Activated B cell treated with CpG ODN at 0.5 μM for 24 hours (primary cell): ENCODE measurements at regions of chr10 and their contacts with region 1.

Region 1: DNA sequence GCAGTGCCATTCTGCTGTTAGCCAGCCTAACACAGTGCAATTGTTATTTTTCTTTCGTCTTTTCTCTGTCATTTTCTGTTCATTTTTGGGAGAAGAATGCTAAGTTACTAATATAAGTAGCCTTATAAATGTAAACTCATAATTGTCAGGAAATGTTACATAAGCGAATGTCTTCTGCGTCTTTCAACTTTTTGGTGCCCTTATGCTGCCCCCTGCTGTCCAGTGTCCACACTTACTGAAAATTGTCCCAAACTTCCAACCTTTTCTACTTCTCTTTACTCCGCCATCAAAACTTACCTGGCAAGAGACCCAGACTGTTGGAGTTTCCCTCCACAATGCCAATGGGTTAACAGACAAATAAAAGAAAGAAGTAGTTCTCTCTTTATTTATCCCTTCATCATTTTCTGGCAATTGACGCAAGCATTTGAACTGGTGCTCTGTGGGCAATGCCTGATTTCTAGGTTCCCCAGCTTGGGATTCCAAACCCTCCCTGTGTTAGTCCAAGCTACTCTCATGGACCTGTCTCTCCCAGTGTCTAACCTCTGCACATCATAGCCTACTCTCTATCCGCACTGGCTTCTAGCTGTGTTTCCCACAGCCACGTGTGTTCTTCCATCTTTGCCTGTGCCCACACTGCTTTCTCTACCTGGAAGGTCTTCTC is 21.0 kb upstream of the EPC1 start:
- DNase-seq: peak; percentile 47
- ATAC-seq: peak; percentile 67
- H3K4me3 Mint-ChIP-seq: no peak overlapping the region
- H3K27ac Mint-ChIP-seq: no peak overlapping the region
- H3K4me1 Mint-ChIP-seq: peaks cover 22% of the 10 kb centered on the region
- H3K27me3 Mint-ChIP-seq: no peaks in the 10 kb centered on the region
- CTCF ChIP-seq: peak; percentile 65

Region 2: DNA sequence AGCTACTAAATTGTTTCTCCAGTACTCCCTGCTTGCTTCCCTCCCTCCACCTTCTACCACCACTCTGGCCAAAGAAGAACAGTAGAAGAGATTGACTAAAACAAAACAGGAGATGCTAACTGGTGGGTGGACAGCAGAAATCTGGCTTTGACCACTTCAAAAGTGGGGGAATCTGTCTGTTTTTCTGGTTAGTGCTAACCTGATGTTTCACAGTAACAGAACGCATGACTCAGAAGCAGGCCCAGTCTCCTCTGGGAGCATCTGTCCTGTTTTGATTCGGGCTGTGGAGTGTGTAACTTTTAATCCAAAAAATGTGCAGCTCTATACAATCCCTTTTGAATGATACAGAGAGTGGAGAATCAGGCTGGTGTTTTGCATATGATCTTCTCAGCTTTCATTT is 1303.6 kb before region 1 on chr10:
- CTCF ChIA-PET with region 1: no interaction called
- POLR2A ChIA-PET with region 1: no interaction called
- intact Hi-C with region 1: no loop called
- DNase-seq: no peak
- ATAC-seq: no peak
- H3K4me3 Mint-ChIP-seq: no peak overlapping the region
- H3K27ac Mint-ChIP-seq: no peak overlapping the region
- H3K4me1 Mint-ChIP-seq: peaks cover 3% of the 10 kb centered on the region
- H3K27me3 Mint-ChIP-seq: peaks cover 30% of the 10 kb centered on the region
- CTCF ChIP-seq: no peak

Region 3: GRCh38 chr10:31578187-31578852 is 789.6 kb before region 1 on chr10:
- CTCF ChIA-PET with region 1: no interaction called
- POLR2A ChIA-PET with region 1: no interaction called
- intact Hi-C with region 1: no loop called
- DNase-seq: no peak
- ATAC-seq: no peak
- H3K4me3 Mint-ChIP-seq: no peak overlapping the region
- H3K27ac Mint-ChIP-seq: peak overlapping the region; percentile 25
- H3K4me1 Mint-ChIP-seq: peaks cover 8% of the 10 kb centered on the region
- H3K27me3 Mint-ChIP-seq: no peaks in the 10 kb centered on the region
- CTCF ChIP-seq: no peak

Region 4: DNA sequence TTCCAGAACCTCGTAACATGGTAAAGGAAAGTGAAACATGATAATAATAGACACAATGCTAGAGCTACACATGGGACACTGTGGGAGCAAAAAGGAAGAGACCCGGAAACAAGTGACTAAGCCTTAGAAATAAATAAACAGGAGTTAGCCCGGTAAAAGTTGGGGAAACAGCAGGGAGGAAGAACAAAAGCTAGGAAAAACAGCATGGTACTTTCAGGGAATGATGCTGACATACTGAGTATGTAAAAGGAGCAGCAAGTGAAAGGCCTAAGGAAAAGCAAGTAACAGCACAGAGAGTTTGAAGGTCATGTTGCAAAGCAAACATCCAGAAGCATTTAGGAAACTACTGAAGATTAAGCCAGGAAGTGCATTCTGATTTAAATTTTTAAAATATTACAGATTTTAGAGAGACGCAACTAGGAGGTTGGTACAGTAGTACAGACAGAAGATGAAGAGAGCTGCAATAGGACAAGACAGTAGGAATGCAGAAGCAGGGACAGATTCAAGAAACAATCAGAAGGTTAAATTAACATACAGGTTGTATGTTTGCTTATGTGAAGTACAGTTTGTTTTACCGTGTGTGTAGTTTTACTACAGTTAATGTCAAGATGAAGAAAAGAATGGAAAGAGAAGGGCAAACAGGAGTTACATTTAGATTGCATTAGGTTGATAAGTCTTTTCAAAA is 502.9 kb before region 1 on chr10:
- CTCF ChIA-PET with region 1: no interaction called
- POLR2A ChIA-PET with region 1: no interaction called
- intact Hi-C with region 1: loop called (anchors 5 kb)
- DNase-seq: no peak
- ATAC-seq: no peak
- H3K4me3 Mint-ChIP-seq: no peak overlapping the region
- H3K27ac Mint-ChIP-seq: no peak overlapping the region
- H3K4me1 Mint-ChIP-seq: peaks cover 27% of the 10 kb centered on the region
- H3K27me3 Mint-ChIP-seq: no peaks in the 10 kb centered on the region
- CTCF ChIP-seq: no peak

Region 5: DNA sequence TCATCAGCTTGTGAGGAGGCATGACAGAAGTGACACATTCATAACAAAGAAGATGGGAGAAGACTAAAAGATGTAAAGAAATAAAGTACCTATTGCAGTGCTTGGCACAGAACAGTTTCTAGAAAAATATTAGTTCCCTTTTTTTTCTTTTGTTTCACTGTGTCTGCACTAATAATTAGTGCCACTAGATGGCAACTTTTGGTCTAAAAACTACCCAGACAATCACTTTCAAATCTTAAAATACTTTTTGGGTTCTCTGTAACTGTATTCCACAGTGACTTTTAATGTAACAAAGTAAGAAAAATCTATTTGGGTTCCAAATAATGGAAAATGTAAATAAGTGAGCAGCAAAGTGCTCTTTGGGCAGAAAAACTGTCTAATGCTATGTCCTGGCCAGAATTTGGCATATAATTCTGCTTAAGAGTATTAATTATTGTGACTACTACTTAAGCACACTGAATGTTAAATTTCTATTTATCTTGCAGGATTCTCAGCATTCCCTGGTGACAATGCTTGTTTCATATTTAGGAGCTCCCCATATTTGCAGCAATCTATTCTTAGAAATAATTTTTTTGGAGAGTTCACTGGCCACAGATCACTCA is 176.9 kb before region 1 on chr10:
- CTCF ChIA-PET with region 1: interaction called, 9 read pairs
- POLR2A ChIA-PET with region 1: no interaction called
- intact Hi-C with region 1: loop called (anchors 1 kb)
- DNase-seq: no peak
- ATAC-seq: peak; percentile 75
- H3K4me3 Mint-ChIP-seq: no peak overlapping the region
- H3K27ac Mint-ChIP-seq: peak overlapping the region; percentile 75
- H3K4me1 Mint-ChIP-seq: peaks cover 4% of the 10 kb centered on the region
- H3K27me3 Mint-ChIP-seq: peaks cover 6% of the 10 kb centered on the region
- CTCF ChIP-seq: no peak

Region 6: GRCh38 chr10:32256613-32257437 is 111.1 kb before region 1 on chr10:
- CTCF ChIA-PET with region 1: interaction called, 75 read pairs
- POLR2A ChIA-PET with region 1: no interaction called
- intact Hi-C with region 1: loop called (anchors 1 kb)
- DNase-seq: peak; percentile 52
- ATAC-seq: peak; percentile 88
- H3K4me3 Mint-ChIP-seq: no peak overlapping the region
- H3K27ac Mint-ChIP-seq: no peak overlapping the region
- H3K4me1 Mint-ChIP-seq: peaks cover 6% of the 10 kb centered on the region
- H3K27me3 Mint-ChIP-seq: no peaks in the 10 kb centered on the region
- CTCF ChIP-seq: peak; percentile 20

Region 7: GRCh38 chr10:32378363-32379317 is 10.7 kb after region 1 on chr10:
- CTCF ChIA-PET with region 1: interaction called, 6 read pairs
- POLR2A ChIA-PET with region 1: interaction called, 10 read pairs
- intact Hi-C with region 1: loop called (anchors 1 kb)
- DNase-seq: peak; percentile 73
- ATAC-seq: peak; percentile 94
- H3K4me3 Mint-ChIP-seq: no peak overlapping the region
- H3K27ac Mint-ChIP-seq: no peak overlapping the region
- H3K4me1 Mint-ChIP-seq: peaks cover 21% of the 10 kb centered on the region
- H3K27me3 Mint-ChIP-seq: no peaks in the 10 kb centered on the region
- CTCF ChIP-seq: no peak

Region 8: DNA sequence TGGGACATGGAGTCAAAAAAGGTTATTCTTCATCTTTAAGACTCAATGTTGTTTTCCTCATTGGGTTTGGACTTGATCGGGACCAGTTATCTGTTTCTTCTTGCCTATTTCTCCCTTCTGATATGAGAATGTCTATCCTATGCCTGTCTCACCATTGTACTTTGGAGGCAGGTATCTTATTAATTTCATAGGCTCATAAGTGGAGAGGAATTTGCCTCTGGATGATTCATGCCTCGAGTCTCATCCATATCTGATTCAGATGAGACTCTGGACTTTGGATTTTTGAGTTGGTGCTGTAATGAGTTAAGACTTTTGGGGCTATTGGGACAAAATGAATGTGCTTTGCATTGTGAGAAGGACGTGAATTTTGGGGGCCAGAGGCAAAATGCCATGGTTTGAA is 41.8 kb after region 1 on chr10:
- CTCF ChIA-PET with region 1: no interaction called
- POLR2A ChIA-PET with region 1: no interaction called
- intact Hi-C with region 1: no loop called
- DNase-seq: no peak
- ATAC-seq: no peak
- H3K4me3 Mint-ChIP-seq: no peak overlapping the region
- H3K27ac Mint-ChIP-seq: no peak overlapping the region
- H3K4me1 Mint-ChIP-seq: no peaks in the 10 kb centered on the region
- H3K27me3 Mint-ChIP-seq: peaks cover 9% of the 10 kb centered on the region
- CTCF ChIP-seq: no peak